Activated CD8-positive, alpha-beta T cell treated with anti-CD3 and anti-CD28 coated beads for 36 hours (primary cell): ENCODE measurements at regions of chr4 and their contacts with region 1.

Region 1: GRCh38 chr4:152436384-152436783 is 99.5 kb downstream of the FBXW7 start:
- DNase-seq: peak; percentile 26
- ATAC-seq: no peak
- H3K4me3 Mint-ChIP-seq: no peak overlapping the region
- H3K27ac Mint-ChIP-seq: no peak overlapping the region
- H3K4me1 Mint-ChIP-seq: peaks cover 39% of the 10 kb centered on the region
- H3K27me3 Mint-ChIP-seq: no peaks in the 10 kb centered on the region
- CTCF ChIP-seq: peak; percentile 32

Region 2: GRCh38 chr4:152424977-152425376 is 11.4 kb before region 1 on chr4:
- CTCF ChIA-PET with region 1: interaction called, 12 read pairs
- POLR2A ChIA-PET with region 1: no interaction called
- intact Hi-C with region 1: no loop called
- DNase-seq: no peak
- ATAC-seq: no peak
- H3K4me3 Mint-ChIP-seq: no peak overlapping the region
- H3K27ac Mint-ChIP-seq: no peak overlapping the region
- H3K4me1 Mint-ChIP-seq: peaks cover 18% of the 10 kb centered on the region
- H3K27me3 Mint-ChIP-seq: no peaks in the 10 kb centered on the region
- CTCF ChIP-seq: no peak

Region 3: DNA sequence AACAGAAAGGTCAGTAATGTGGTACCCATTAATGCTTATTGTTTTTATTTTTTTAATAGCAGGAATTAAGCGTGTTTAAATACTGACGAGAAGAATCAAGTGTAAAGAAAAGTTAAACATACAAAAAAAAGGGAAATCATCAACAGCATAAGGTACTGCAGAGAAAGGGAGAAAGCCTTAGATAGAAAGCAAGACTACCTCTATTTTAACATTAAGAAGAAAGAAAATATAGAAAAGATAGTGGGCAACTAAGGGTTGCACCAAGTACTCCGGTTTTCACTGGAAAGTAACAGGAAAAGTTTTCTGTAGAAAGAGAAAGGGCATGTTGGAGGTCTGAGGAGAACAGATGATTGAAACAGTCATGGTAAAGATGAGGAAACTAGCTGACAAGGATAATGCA is 57.6 kb after region 1 on chr4:
- CTCF ChIA-PET with region 1: no interaction called
- POLR2A ChIA-PET with region 1: no interaction called
- intact Hi-C with region 1: no loop called
- DNase-seq: no peak
- ATAC-seq: no peak
- H3K4me3 Mint-ChIP-seq: no peak overlapping the region
- H3K27ac Mint-ChIP-seq: no peak overlapping the region
- H3K4me1 Mint-ChIP-seq: peaks cover 47% of the 10 kb centered on the region
- H3K27me3 Mint-ChIP-seq: no peaks in the 10 kb centered on the region
- CTCF ChIP-seq: no peak